H1 (cell line): ENCODE measurements at regions of chr1 and their contacts with region 1.

Region 1: DNA sequence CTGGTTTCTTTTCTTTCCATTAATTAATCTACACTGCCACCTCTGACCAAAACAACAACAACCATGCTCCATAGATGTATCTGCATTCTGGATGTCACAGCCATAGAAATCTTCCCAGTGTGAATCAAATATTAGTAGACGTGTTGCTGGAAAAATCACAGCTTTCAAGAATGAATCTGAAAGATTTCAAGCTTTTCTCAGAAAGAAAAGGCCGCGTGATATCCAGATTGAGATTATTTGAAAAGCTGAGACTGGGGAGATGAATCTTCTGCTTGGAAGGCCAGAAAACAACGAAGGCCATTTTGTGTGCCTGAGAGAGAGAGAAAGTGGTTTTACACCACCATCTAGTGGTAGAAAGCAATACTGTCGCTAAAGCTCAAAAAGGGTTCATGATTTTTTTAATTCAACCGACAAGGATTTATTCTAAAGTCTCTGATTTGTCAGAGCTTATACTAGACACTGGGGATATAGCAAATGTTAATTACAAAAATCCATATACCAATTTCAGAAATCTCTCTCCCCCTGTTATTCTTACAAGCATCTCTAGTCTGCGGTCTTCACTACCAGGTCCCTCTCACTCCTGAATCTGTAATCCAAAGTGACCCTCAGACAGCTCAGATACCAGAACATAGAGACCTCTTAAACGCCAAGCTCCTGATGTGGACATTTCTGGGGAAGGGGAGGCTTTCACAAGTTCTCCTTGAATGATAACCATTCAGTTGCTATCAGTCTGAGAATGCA is 87.5 kb upstream of the SGIP1 start:
- DNase-seq: no peak
- H3K4me3 ChIP-seq: peak overlapping the region in 1 of 4 experiments; percentile 9; a peak in 1 of 8 replicates
- H3K27ac ChIP-seq: no peak overlapping the region
- H3K4me1 ChIP-seq: peaks cover 0 to 6% (median 0%) of the 10 kb centered on the region in 4 experiments; a peak in 3 of 7 replicates
- H3K27me3 ChIP-seq: no peaks in the 10 kb centered on the region
- CTCF ChIP-seq: peak in 2 of 3 experiments; percentile 71 to 74; a peak in 3 of 4 replicates
- EP300 ChIP-seq: no peak
- POLR2A ChIP-seq: no peak
- RAD21 ChIP-seq: peak; percentile 93 to 95

Region 2: DNA sequence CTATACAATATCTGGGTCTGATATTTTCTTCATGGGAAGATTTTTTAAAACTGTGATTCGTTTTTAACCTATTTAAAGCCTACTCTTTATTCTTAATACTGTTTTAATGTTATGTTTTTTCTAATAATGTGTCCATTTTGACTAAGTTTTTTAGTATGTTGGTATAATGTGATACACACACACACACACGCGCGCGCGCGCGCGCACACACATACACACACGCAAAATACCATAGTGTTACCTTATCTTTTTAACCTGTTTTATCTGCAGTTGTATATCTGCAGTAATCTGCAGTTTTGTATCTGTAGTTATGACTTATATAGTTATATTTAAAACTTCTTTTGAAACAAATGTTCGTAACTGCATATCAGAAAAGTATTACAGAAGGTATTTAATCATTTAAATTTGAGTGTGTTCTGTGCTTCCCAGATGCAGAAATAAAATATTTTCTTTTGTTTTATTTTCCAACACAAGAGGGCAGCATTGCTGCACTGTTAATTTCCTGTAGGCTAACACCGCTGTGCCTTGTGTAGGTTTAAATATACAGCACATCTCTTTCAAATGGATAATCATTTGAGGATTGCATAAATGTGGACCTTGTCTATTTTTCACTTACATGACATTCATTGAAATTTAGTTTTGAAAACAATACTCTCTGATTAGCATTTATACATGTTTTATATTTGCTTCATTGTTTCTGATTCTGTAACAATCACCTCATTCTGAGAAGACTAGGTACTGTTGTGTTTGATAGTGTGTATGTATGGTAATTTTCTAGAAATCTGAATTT is 487.7 kb before region 1 on chr1:
- CTCF ChIA-PET with region 1: interaction called, 27 read pairs
- POLR2A ChIA-PET with region 1: no interaction called
- DNase-seq: no peak
- H3K4me3 ChIP-seq: no peak overlapping the region
- H3K27ac ChIP-seq: no peak overlapping the region
- H3K4me1 ChIP-seq: no peaks in the 10 kb centered on the region
- H3K27me3 ChIP-seq: no peaks in the 10 kb centered on the region
- CTCF ChIP-seq: peak in 2 of 3 experiments; percentile 47 to 69; a peak in 3 of 4 replicates
- EP300 ChIP-seq: no peak
- POLR2A ChIP-seq: no peak
- RAD21 ChIP-seq: peak; percentile 90 to 92

Region 3: GRCh38 chr1:66262211-66262963 is 184.0 kb before region 1 on chr1:
- CTCF ChIA-PET with region 1: interaction called, 273 read pairs
- POLR2A ChIA-PET with region 1: no interaction called
- DNase-seq: no peak
- H3K4me3 ChIP-seq: no peak overlapping the region
- H3K27ac ChIP-seq: no peak overlapping the region
- H3K4me1 ChIP-seq: peaks cover 0 to 3% (median under 1%) of the 10 kb centered on the region in 4 experiments; a peak in 2 of 7 replicates
- H3K27me3 ChIP-seq: no peaks in the 10 kb centered on the region
- CTCF ChIP-seq: no peak
- EP300 ChIP-seq: no peak
- POLR2A ChIP-seq: no peak
- RAD21 ChIP-seq: no peak

Region 4: DNA sequence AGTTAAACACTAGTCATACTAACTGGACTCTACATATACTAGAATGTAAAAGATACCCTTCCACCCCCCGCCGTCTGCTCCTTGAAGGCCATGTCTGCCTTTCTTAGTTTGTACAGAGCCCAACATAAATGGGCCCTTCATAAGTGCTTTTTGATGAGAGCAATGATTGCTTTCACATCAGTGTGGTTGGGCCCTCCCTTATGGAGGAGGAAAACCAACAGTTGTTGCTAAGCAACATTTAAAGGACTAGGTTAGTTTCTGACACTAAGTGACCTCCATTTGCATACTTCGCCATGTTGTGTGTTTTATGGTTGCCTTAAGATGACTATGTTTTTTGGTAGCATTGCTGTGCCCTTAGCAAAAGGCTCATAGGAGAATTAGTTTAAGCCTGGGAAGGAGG is 94.5 kb before region 1 on chr1:
- CTCF ChIA-PET with region 1: interaction called, 15 read pairs
- POLR2A ChIA-PET with region 1: no interaction called
- DNase-seq: no peak
- H3K4me3 ChIP-seq: no peak overlapping the region
- H3K27ac ChIP-seq: no peak overlapping the region
- H3K4me1 ChIP-seq: peaks cover 5 to 22% (median 17%) of the 10 kb centered on the region in 4 experiments
- H3K27me3 ChIP-seq: no peaks in the 10 kb centered on the region
- CTCF ChIP-seq: no peak
- EP300 ChIP-seq: no peak
- POLR2A ChIP-seq: no peak
- RAD21 ChIP-seq: no peak

Region 5: GRCh38 chr1:66374561-66375111 is 71.8 kb before region 1 on chr1:
- CTCF ChIA-PET with region 1: interaction called, 13 read pairs
- POLR2A ChIA-PET with region 1: no interaction called
- DNase-seq: no peak
- H3K4me3 ChIP-seq: no peak overlapping the region
- H3K27ac ChIP-seq: no peak overlapping the region
- H3K4me1 ChIP-seq: no peaks in the 10 kb centered on the region
- H3K27me3 ChIP-seq: no peaks in the 10 kb centered on the region
- CTCF ChIP-seq: no peak
- EP300 ChIP-seq: no peak
- POLR2A ChIP-seq: no peak
- RAD21 ChIP-seq: no peak